ENCODE measurements at regions of chr3 and their contacts with region 1.

Region 1: DNA sequence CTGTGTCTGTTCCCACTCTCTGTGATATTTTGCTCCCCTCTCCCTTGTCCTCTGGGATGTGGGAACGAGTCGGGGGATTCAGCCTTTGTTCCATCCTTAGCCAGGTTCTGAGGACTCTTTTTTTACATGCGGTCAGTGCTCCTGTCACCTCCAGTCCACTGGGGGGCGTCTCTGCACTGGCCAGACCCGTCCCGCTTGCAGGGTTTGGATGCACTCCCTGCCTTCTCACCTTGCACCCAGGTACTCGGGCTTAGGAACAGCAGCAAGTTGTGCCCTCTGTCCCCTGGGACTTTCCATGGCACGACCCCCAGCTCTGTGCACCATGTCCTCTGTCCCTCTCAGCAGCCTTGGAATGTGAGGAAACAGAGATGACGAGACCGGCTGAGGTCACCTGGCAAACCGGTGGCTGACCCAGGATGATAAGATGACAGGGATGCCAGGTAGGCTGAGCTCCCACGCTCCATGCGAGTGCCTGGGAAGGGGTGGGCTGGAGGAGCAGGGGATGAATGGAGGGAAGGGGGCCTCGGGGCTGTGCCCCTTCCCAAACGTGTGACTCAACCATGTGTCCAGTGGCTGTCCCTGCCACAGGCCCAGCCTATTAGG is 27.3 kb upstream of the FGD5 start:
- DNase-seq: peak; percentile 26
- H3K4me3 ChIP-seq: no peak overlapping the region
- H3K27ac ChIP-seq: no peak overlapping the region
- H3K4me1 ChIP-seq: no peaks in the 10 kb centered on the region
- H3K27me3 ChIP-seq: peaks cover 4% of the 10 kb centered on the region
- CTCF ChIP-seq: peak; percentile 52 to 82

Region 2: GRCh38 chr3:14266361-14266760 is 525.1 kb before region 1 on chr3:
- CTCF ChIA-PET with region 1: no interaction called
- dilution Hi-C with region 1: no loop called
- in situ Hi-C with region 1: no loop called
- intact Hi-C with region 1: no loop called
- DNase-seq: no peak
- H3K4me3 ChIP-seq: no peak overlapping the region
- H3K27ac ChIP-seq: no peak overlapping the region
- H3K4me1 ChIP-seq: peaks cover 11% of the 10 kb centered on the region
- H3K27me3 ChIP-seq: no peaks in the 10 kb centered on the region
- CTCF ChIP-seq: no peak

Region 3: GRCh38 chr3:14577897-14578296 is 213.5 kb before region 1 on chr3:
- CTCF ChIA-PET with region 1: no interaction called
- dilution Hi-C with region 1: no loop called
- in situ Hi-C with region 1: no loop called
- intact Hi-C with region 1: no loop called
- DNase-seq: no peak
- H3K4me3 ChIP-seq: no peak overlapping the region
- H3K27ac ChIP-seq: no peak overlapping the region
- H3K4me1 ChIP-seq: no peaks in the 10 kb centered on the region
- H3K27me3 ChIP-seq: no peaks in the 10 kb centered on the region
- CTCF ChIP-seq: peak in 1 of 2 donors; percentile 8

Region 4: DNA sequence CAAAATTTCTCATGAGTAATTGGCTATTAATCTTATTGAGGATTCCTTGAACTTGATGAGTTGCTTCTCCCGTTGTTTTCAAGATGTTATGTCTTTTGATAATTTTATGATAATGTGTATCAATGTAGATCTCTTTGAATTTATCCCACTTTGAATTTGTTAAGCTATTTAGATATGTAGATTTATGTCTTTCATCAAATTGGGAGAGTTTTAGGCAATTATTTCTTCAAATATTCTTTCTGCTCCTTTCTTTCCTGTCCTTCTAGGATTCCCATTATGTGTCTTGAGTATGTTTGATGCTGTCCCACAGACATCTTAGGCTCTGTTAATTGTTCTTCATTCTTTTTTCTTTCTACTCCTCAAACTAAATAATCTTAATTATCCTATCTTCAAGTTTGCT is 40.8 kb before region 1 on chr3:
- CTCF ChIA-PET with region 1: no interaction called
- dilution Hi-C with region 1: loop called (anchors 5 kb)
- in situ Hi-C with region 1: no loop called
- intact Hi-C with region 1: no loop called
- DNase-seq: no peak
- H3K4me3 ChIP-seq: no peak overlapping the region
- H3K27ac ChIP-seq: no peak overlapping the region
- H3K4me1 ChIP-seq: no peaks in the 10 kb centered on the region
- H3K27me3 ChIP-seq: peaks cover 2% of the 10 kb centered on the region
- CTCF ChIP-seq: no peak

Region 5: DNA sequence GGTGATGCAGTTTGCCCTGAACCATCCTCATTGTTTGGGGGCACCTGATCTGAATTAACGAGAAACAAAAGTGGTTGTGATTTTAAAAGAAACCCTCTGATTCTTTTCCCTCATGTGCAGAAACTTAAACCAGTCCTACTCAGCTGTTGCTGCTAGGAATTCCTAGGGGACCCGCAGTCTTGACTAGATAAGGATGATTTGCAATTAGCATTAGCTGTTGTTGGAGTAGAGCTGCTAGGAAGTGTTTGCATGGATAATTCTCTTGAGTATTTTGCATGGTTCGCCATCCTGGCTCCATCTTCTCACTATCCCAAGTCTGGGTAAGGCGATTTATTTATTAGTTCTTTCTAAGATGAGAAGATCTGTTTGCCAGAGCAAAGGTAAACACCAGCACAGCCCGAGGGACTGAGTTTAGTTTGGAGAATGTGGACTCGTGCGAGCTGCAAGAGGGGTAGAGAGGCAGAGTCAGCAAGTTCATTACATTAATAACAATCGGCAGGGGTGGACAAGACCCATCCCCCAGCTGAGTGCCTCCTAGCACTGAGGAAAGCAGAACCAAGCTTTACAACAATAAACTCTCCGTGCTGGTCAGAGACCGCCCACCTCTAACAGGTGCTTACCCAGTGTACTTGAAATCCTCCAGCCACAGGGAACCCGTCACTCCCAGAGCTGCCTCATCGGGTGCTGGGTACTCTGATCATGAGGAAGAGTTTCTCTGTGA is 31.4 kb after region 1 on chr3:
- CTCF ChIA-PET with region 1: interaction called, 3 read pairs
- dilution Hi-C with region 1: loop called (anchors 5 kb)
- in situ Hi-C with region 1: no loop called
- intact Hi-C with region 1: no loop called
- DNase-seq: no peak
- H3K4me3 ChIP-seq: no peak overlapping the region
- H3K27ac ChIP-seq: no peak overlapping the region
- H3K4me1 ChIP-seq: no peaks in the 10 kb centered on the region
- H3K27me3 ChIP-seq: no peaks in the 10 kb centered on the region
- CTCF ChIP-seq: no peak

Region 6: GRCh38 chr3:14915636-14916222 is 124.3 kb after region 1 on chr3:
- CTCF ChIA-PET with region 1: interaction called, 3 read pairs
- dilution Hi-C with region 1: loop called (anchors 5 kb)
- in situ Hi-C with region 1: loop called in 1 of 2 experiments (anchors 25 kb)
- intact Hi-C with region 1: loop called (anchors 1 kb)
- DNase-seq: no peak
- H3K4me3 ChIP-seq: no peak overlapping the region
- H3K27ac ChIP-seq: no peak overlapping the region
- H3K4me1 ChIP-seq: peaks cover 5% of the 10 kb centered on the region
- H3K27me3 ChIP-seq: peaks cover 4% of the 10 kb centered on the region
- CTCF ChIP-seq: peak in 1 of 2 donors; percentile 24